Activated CD4-positive, alpha-beta T cell treated with anti-CD3 and anti-CD28 coated beads, Interleukin-2, amount 10 ng/mL, durations not matched to agents 24 days and 14 days (primary cell): ENCODE measurements at regions of chr17 and their contacts with region 1.

Region 1: DNA sequence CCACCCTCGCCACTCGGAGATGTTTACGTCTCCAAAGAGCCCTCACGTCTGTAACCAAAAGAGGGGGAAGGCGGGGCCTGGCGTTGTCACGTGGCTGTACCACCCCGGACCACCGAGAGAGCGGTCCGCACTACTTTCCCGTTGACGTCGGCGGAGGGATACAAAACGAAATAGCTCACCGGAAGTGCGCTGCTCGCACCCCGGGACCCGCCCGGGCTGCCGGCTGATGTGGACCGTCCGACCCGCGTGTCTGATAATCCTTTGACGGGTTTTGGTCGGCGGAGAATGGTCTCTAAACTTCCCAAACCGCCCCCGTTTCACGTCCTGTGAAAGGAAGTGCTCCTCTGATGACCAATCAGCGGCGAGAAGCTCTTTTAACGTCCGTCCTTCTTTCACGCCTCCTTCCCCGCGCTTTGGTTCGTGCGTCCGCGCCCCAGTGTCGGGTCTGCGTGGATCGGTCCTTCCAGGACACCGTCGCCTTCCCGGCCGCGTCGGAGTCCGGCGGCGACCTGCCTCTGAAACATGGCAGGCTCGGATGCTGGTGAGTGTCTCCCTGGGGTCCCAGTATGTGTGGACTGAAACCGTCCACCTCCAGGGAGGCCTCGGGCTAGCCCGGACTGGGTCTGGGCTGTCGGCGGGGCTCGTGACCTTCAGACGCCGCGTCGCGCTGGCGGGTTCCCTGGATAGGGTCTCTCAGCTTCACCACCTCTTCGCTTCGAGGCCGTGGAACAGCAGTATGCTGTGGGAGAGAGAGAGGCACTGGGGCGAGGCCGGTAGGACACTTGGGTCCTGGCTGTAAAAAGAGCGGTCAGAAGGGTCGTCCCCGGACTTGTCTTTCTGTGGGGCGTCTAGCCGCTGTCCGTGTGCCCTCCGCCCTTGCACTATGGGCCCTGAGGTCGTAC is at the start of gene CEP95:
- DNase-seq: peak; percentile 98
- H3K4me3 Mint-ChIP-seq: peak within 1 kb of the TSS; percentile 99
- H3K27ac Mint-ChIP-seq: peak within 1 kb of the TSS; percentile 100
- H3K4me1 Mint-ChIP-seq: peaks cover 40% of the 10 kb centered on the region
- H3K27me3 Mint-ChIP-seq: no peaks in the 10 kb centered on the region
- total RNA-seq, gene CEP95: 42.9 and 48.3 TPM in 2 replicates

Region 2: DNA sequence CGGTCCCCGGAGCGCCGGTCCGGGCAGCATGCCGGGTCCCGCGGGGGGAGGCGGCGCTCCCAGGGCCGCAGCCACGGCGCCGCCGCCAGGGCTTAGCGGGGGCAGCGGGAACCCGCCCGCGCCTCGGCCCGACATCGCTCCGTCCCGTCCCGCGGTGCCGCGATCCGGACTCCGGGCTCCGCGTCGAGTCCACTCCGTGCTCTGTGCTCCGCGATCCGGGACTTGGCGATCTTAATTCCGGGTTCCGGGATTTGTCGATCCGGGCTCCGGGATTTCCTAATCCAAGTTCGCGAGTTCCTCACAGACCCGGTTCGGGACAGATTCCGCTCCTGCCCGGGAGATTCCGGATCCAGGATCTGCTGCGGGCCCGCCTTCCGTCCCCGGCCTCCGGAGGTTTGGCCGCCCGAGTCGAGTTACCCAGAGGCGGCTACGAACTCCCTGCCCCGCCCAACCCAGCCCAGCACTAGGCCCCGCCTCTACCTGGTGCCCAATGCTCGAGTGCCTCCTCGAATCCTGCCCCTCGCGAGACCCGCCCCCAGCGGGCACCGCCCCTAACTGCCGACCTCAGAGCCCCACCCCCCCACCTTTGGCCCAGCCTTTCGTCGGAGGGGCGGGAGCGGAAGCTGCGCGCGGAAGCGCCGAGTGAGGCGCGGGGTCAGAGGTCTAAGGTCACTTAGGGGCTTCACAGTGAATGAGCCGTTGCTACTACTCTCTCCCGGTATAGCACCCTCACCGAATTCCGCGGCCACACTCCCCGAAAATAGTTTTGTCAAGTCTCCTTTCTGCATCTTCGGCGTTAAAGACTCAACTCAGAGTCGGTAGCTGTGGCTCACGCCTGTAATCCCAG is 664.1 kb before region 1 on chr17 and contains the start of gene SMARCD2:
- intact Hi-C with region 1: loop called (anchors 1 kb)
- DNase-seq: peak; percentile 99
- H3K4me3 Mint-ChIP-seq: peak within 1 kb of the TSS; percentile 98
- H3K27ac Mint-ChIP-seq: peak within 1 kb of the TSS; percentile 93
- H3K4me1 Mint-ChIP-seq: peaks cover 27% of the 10 kb centered on the region
- H3K27me3 Mint-ChIP-seq: no peaks in the 10 kb centered on the region
- total RNA-seq, gene SMARCD2: 120 and 121 TPM in 2 replicates

Region 3: DNA sequence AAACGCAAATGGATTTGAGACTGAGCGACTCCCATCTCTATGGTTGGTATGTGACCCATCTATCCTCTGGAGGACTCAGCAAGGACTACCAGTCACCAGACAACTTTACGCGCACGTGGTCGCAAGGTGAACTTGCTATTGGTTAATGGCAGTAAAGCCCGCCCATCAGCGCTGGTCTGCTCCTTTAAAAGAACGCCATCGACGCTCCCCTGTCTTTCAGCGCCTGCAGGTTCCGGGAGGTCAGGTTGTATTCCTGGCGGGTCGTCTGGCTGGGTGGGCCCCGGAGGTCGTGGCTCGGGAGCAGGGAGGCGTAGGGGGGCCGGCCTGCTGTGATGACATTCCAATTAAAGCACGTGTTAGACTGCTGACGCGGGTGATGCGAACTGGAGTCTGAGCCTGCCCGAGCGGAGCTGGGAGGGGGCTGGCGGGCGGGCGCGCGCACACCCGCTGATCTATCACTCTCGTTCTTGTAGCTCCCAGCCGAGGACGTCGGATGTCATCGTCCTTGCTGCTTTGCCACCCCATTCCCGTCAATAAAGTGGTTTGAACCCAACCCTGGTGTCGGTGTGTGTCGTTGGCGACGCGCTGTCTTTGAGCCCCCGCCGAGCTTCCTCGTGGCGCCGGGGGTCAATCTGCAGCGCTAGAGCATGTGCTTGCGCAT is 360.9 kb before region 1 on chr17:
- intact Hi-C with region 1: loop called (anchors 5 kb)
- DNase-seq: peak; percentile 98
- H3K4me3 Mint-ChIP-seq: no peak overlapping the region
- H3K27ac Mint-ChIP-seq: no peak overlapping the region
- H3K4me1 Mint-ChIP-seq: peaks cover 25% of the 10 kb centered on the region
- H3K27me3 Mint-ChIP-seq: no peaks in the 10 kb centered on the region

Region 4: DNA sequence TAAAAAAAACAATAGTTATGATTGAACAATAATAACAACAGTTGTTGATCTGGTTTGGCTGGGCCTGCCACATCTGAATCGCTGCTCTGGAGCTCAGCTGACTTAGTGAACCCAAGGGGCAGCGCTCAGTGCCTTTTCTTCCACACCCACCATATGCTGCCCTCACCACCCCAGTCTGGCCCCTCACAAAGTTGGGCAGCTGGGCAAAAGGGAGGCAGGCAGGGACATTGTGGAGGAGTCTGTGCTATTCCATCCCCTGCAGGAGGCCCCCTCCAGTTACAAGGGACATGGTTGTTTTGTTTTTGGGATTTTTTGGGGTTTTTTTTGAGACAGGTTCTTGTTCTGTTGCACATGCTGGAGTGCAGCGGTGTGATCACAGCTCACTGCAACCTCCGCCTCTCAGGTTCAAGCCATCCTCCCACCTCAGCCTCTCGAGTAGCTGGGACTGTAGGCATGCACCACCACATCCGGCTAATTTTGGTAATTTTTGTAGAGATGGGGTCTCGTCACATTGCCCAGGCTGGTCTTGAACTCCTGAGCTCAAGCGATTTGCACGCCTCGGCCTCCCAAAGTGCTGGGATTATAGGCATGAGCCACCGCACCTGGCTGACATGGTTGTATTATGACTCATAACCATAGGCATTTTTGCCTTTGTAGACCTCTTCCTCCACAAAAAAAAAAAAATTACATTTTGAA is 107.6 kb before region 1 on chr17:
- intact Hi-C with region 1: no loop called
- DNase-seq: no peak
- H3K4me3 Mint-ChIP-seq: no peak overlapping the region
- H3K27ac Mint-ChIP-seq: no peak overlapping the region
- H3K4me1 Mint-ChIP-seq: peaks cover 27% of the 10 kb centered on the region
- H3K27me3 Mint-ChIP-seq: no peaks in the 10 kb centered on the region

Region 5: GRCh38 chr17:64599827-64600226 is 93.0 kb after region 1 on chr17:
- intact Hi-C with region 1: loop called (anchors 5 kb)
- DNase-seq: no peak
- H3K4me3 Mint-ChIP-seq: peak overlapping the region; percentile 73
- H3K27ac Mint-ChIP-seq: no peak overlapping the region
- H3K4me1 Mint-ChIP-seq: peaks cover 21% of the 10 kb centered on the region
- H3K27me3 Mint-ChIP-seq: no peaks in the 10 kb centered on the region

Region 6: GRCh38 chr17:64661976-64662773 is 155.3 kb after region 1 on chr17 and contains the start of gene SMURF2:
- intact Hi-C with region 1: loop called (anchors 2 kb)
- DNase-seq: peak; percentile 94
- H3K4me3 Mint-ChIP-seq: peak within 1 kb of the TSS; percentile 96
- H3K27ac Mint-ChIP-seq: peak within 1 kb of the TSS; percentile 95
- H3K4me1 Mint-ChIP-seq: peaks cover 26% of the 10 kb centered on the region
- H3K27me3 Mint-ChIP-seq: no peaks in the 10 kb centered on the region
- total RNA-seq, gene SMURF2: 10.3 and 11.3 TPM in 2 replicates